ENCODE measurements at regions of chr21 and their contacts with region 1.

Region 1: GRCh38 chr21:31173881-31174555 is 135.7 kb upstream of the KRTAP19-8 start:
- DNase-seq: peak; percentile 76
- H3K4me3 ChIP-seq: no peak overlapping the region; a peak in 1 of 4 replicates
- H3K27ac ChIP-seq: peak overlapping the region; percentile 10 to 99; a peak in 2 of 4 replicates
- H3K4me1 ChIP-seq: peaks cover 0 to 56% of the 10 kb centered on the region in 2 experiments; a peak in 2 of 4 replicates
- H3K27me3 ChIP-seq: no peaks in the 10 kb centered on the region
- CTCF ChIP-seq: no peak
- EP300 ChIP-seq: peak in 1 of 2 experiments; percentile 94; a peak in 2 of 4 replicates
- RAD21 ChIP-seq: peak; percentile 10; the same call in 1 of the 2 replicates

Region 2: DNA sequence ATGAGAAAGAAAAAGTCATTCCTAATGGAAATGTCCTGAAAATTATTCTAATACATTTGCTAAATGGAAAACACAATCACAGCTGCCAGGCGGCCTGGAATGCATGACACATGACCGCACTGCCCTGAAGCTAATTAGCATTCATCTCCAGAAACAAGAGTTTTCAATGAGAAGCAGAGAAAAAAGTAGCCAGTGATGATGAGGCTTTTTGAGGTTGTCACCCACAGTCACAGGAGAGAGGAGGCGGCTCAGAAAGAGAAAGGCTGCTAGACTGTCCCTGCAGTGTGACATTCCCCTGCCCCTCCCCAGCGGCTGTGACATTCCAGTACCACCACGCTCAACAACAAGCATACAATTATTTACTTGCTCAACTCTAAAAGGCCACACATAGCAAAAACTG is 12.9 kb before region 1 on chr21:
- CTCF ChIA-PET with region 1: interaction called, 15 read pairs
- POLR2A ChIA-PET with region 1: interaction called, 36 read pairs
- DNase-seq: peak; percentile 44
- H3K4me3 ChIP-seq: peak overlapping the region; percentile 52 to 61
- H3K27ac ChIP-seq: peak overlapping the region in 1 of 2 experiments; percentile 95; a peak in 2 of 4 replicates
- H3K4me1 ChIP-seq: peaks cover 0 to 27% of the 10 kb centered on the region in 2 experiments; a peak in 2 of 4 replicates
- H3K27me3 ChIP-seq: no peaks in the 10 kb centered on the region
- CTCF ChIP-seq: no peak
- EP300 ChIP-seq: 0 out of 4 replicates have a peak, but pooled peaks of 1 of the 2 experiments have one; percentile 22
- RAD21 ChIP-seq: no peak

Region 3: GRCh38 chr21:31195334-31196015 is 21.5 kb after region 1 on chr21:
- CTCF ChIA-PET with region 1: no interaction called
- POLR2A ChIA-PET with region 1: no interaction called
- DNase-seq: no peak
- H3K4me3 ChIP-seq: no peak overlapping the region
- H3K27ac ChIP-seq: no peak overlapping the region
- H3K4me1 ChIP-seq: peaks cover 0 to 4% of the 10 kb centered on the region in 2 experiments; a peak in 1 of 4 replicates
- H3K27me3 ChIP-seq: no peaks in the 10 kb centered on the region
- CTCF ChIP-seq: no peak
- EP300 ChIP-seq: no peak
- RAD21 ChIP-seq: no peak